ENCODE measurements at regions of chr19 and their contacts with region 1.

Region 1: DNA sequence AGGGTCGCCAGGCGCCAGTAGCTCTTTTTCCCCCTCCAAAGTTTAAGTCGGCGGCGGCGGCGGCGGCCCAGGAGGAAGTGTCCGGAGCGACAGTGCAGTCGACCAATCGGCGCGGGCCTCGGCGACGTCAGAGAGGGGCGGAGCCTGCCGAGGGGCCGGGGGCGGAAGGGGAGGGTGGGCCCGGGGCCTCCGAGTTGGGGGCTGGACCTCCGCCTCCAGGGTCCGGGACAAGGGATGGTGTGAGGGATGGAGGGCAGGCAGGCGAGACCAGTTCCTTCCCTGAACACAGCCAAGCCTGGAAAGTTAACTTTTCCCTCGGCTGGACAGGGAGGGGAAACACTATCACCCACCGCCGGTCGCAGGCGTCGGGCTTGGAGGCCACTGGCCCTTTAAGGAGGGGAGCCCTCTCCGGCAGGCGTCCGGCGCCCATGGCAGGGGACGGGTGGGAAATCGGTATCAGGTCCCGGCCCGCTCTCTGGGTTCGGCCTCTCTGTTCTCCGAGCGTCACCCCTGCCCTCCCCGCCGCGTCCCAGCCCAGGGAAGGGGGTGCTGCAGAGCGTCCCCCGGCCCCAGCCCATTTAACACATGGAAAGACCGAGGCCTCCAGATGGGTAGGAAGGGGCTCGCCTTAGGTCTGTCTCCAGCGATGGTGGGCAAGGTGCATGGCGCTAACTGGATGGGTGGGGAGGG is at the start of gene PRKD2:
- DNase-seq: no peak
- ATAC-seq: peak; percentile 82
- H3K4me3 ChIP-seq: peak within 1 kb of the TSS; percentile 71 to 74
- H3K27ac ChIP-seq: peak within 1 kb of the TSS; percentile 89
- H3K4me1 ChIP-seq: peaks cover 5% of the 10 kb centered on the region
- H3K27me3 ChIP-seq: no peaks in the 10 kb centered on the region
- CTCF ChIP-seq: no peak
- total RNA-seq, gene PRKD2: 41.2 TPM

Region 2: DNA sequence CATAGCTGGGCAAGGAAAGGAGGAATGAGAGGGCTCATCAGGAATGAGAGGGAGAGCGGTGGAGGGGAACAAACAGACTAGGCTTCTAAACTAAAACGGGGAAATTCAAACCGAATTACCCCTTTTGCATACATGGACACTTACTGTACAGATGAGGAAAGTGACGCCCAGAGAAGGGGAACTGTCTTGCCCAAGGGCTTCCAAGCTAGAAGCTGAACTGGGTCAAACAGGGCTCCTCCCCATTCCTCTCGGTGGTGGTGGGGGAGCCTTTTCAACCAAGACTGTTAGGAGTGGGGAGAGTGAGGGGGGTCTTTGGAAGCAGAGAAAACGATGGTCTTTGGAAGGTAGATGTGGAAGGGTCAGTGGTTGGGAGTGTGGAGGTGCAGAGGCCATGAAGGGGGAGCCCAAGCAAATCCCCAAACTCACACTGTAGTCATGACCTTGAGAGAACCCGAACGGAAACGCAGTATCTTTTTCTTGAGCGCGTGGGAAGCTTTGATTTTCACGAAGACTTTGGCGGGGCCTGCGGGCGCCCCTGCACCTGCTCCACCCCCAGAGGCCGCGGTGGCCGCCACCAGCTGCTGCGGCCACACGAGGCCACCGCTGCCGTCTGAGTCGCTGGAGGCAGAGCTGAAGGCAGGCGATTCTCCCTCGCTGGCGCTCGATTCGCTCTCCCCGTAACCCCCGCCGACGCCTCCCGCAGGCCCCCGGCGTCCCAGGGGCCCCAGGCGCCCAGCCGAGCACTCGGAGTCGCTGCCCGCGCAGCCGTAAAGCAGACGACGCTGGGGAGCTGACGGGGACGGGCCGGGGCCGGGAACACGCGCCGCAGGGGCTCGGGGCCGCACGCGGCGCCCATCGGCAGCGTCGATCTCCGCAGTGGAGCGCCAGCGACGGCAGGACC is 68.9 kb before region 1 on chr19:
- CTCF ChIA-PET with region 1: no interaction called
- POLR2A ChIA-PET with region 1: interaction called, 12 read pairs
- in situ Hi-C with region 1: no loop called
- intact Hi-C with region 1: no loop called
- DNase-seq: no peak
- ATAC-seq: no peak
- H3K4me3 ChIP-seq: no peak overlapping the region
- H3K27ac ChIP-seq: no peak overlapping the region
- H3K4me1 ChIP-seq: no peaks in the 10 kb centered on the region
- H3K27me3 ChIP-seq: no peaks in the 10 kb centered on the region
- CTCF ChIP-seq: no peak

Region 3: DNA sequence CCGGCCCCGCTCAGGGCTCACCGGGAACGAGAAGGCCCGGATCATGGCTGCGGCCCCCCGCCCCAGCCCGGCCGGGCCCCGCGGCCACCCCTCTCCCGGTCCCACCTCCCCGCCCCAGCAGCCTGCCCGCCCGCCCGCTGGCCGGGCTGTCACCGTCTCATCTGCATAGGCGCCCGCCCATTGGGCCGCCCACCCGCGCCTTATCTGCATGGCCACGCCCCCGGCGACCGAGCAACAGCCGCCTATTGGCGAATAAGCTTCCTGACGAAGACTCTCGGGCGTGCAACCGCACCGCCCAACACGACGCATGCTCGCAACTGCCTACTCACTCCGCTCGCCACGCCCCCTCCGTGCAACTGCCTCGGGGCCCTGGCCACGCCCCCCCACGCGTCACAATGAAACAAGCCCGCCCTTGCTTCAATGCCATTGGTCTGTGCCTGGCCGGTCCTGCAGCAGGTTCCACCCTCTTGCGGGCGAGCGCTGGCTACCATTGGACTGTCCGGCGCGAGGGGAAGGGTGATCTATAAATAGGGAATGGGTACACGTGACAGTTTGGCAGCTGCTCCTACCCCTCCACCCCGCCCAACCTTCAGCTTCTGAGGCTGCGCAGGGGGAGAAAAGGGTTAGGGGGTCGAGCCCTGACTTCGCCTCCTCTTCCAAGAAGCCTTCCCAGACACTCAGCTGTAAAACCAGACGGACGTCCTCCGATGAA is 56.0 kb before region 1 on chr19 and contains the start of gene DACT3:
- CTCF ChIA-PET with region 1: no interaction called
- POLR2A ChIA-PET with region 1: no interaction called
- in situ Hi-C with region 1: no loop called
- intact Hi-C with region 1: no loop called
- DNase-seq: peak; percentile 89
- ATAC-seq: peak; percentile 95
- H3K4me3 ChIP-seq: peak within 1 kb of the TSS; percentile 49 to 65
- H3K27ac ChIP-seq: 0 out of 2 replicates have a peak within 1 kb of the TSS, but pooled peaks have one; percentile 29
- H3K4me1 ChIP-seq: peaks cover 7% of the 10 kb centered on the region
- H3K27me3 ChIP-seq: no peaks in the 10 kb centered on the region
- CTCF ChIP-seq: no peak
- total RNA-seq, gene DACT3: 1.0 TPM

Region 4: GRCh38 chr19:46753420-46754155 is 36.4 kb after region 1 on chr19:
- CTCF ChIA-PET with region 1: no interaction called
- POLR2A ChIA-PET with region 1: no interaction called
- in situ Hi-C with region 1: no loop called
- intact Hi-C with region 1: no loop called
- DNase-seq: no peak
- ATAC-seq: no peak
- H3K4me3 ChIP-seq: no peak overlapping the region
- H3K27ac ChIP-seq: no peak overlapping the region
- H3K4me1 ChIP-seq: no peaks in the 10 kb centered on the region
- H3K27me3 ChIP-seq: no peaks in the 10 kb centered on the region
- CTCF ChIP-seq: peak; percentile 50